Head of caudate nucleus (tissue), 42 donors: ENCODE measurements at regions of chr3 and their contacts with region 1.

Region 1: GRCh38 chr3:177197041-177197727 is at the start of gene TBL1XR1:
- DNase-seq: peak; percentile 88 to 98 (median 94)

Region 2: DNA sequence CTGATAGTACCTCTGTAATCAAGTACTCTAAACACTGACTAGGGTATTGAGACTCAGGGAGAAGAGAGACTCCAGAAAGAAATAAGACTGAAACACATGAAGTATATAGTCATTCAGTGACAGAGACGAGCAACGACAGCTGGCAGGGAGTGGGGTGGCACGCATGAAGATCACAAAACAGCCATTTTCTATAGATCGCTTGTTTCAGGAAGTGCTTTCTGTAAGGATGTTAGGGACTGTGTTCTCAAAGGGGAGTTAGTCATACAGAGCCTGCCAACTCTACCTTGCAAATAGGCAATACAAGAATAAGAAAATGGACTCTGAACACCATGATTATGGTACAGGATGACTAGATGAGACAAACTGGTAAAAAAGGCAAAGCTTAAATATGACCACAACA is 139.4 kb before region 1 on chr3:
- intact Hi-C with region 1: loop called (anchors 2 kb)
- DNase-seq: no peak

Region 3: GRCh38 chr3:177491296-177492032 is 294.3 kb after region 1 on chr3:
- intact Hi-C with region 1: loop called (anchors 10 kb)
- DNase-seq: peak in 34 of 42 donors; percentile 21 to 87 (median 64)